HEK293T (cell line): ENCODE measurements at regions of chr5 and their contacts with region 1.

Region 1: GRCh38 chr5:136769900-136770684 is 404.7 kb upstream of the TRPC7 start:
- DNase-seq: peak; percentile 75

Region 2: DNA sequence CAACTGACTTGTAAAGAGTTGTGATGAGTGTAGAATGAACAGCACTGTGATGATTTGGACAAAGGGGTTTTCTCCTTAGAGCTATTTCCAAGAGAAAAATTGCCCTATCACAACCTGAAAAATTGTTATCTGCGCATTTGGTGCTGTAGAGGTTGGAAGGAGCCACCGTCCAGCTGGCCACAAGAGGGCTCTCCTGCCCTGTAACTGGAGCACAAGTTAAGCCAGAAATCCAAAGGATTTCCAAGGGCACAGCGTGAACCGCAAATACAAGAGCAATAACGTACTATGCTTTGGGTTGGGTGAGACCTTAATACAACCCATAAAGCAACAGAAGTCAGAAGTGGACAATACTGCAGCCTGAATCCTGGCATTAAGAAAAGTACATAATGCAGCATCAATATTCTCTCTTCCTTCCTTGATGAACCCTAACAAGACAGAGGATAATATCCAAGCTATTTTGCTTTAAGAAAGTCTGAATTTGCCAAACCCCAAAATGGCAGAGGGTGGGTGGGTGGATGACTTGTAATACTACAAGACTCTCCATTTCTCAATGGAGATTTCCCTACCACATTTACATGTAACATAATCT is 520.3 kb before region 1 on chr5:
- CTCF ChIA-PET with region 1: interaction called, 15 read pairs
- POLR2A ChIA-PET with region 1: no interaction called
- DNase-seq: peak; percentile 71

Region 3: GRCh38 chr5:136364307-136364706 is 405.8 kb before region 1 on chr5:
- CTCF ChIA-PET with region 1: interaction called, 13 read pairs
- POLR2A ChIA-PET with region 1: no interaction called
- DNase-seq: no peak

Region 4: DNA sequence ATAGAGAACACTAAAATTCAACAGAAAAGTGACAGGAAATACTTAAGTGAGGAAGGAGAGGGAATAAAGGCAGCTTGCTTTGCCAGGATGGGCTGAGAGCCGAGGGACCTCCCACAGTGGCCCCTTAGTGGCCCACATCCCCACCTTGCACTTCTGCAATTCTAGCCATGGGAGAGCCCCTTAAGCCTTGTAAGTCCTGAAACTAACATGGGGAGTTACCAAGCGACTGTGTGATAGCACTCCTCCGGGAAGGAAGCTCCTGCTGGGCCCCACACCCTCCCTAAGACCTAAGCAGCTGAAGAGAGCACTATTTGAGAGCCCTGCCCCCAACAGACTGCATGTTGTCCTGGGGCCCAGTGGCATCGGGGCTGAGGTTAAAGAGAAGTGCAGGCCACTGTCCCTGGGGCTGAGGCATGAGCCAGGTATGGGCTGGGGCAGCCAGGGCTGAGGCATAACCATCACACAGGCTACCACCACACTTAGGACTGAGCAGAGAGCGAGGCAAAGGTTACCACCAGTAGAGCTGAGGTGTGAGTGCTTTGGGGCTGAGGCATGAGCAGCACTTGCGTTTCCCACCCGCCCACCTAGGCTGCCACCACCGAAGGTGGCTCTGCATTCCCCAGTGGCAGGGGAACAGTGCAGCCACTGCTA is 103.0 kb before region 1 on chr5:
- CTCF ChIA-PET with region 1: no interaction called
- POLR2A ChIA-PET with region 1: no interaction called
- DNase-seq: no peak

Region 5: DNA sequence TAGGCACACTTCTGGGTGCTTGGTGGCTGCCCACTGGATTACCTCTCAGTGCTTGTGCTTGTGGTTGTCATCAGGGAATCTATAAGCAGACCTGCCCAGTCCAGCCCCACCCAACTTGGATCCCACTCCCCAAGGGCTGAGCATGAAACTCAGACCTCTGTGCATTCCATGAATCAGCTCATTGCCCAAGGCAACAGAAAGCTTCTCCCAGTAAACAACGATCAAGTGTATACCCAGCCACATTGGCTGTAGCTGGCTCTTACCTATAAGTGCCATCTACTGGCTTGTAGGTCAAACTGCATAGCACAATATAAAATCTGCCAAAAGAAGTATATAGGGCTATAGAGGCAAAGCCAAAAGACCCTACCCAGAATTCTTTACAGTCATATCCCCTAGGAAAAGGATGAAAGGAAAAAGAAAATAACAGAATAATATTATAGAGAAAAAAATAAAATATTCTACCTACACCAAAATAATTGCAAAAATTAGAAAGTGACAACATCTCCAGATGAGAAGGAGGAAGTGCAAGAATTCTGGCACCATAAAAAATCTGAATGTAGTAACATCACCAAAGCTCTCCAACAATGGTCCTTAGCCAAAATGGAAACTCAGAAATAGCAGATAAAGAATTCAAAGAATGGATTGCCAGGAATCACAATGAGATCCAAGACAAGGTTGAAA is 83.8 kb before region 1 on chr5:
- CTCF ChIA-PET with region 1: no interaction called
- POLR2A ChIA-PET with region 1: no interaction called
- DNase-seq: no peak

Region 6: GRCh38 chr5:136819526-136820307 is 49.6 kb after region 1 on chr5:
- CTCF ChIA-PET with region 1: no interaction called
- POLR2A ChIA-PET with region 1: no interaction called
- DNase-seq: no peak